Astrocyte of the cerebellum (primary cell): ENCODE measurements at regions of chr5 and their contacts with region 1.

Region 1: GRCh38 chr5:69374911-69375446 is 5.4 kb downstream of the RAD17 start:
- DNase-seq: no peak
- H3K4me3 ChIP-seq: no peak overlapping the region
- CTCF ChIP-seq: no peak

Region 2: DNA sequence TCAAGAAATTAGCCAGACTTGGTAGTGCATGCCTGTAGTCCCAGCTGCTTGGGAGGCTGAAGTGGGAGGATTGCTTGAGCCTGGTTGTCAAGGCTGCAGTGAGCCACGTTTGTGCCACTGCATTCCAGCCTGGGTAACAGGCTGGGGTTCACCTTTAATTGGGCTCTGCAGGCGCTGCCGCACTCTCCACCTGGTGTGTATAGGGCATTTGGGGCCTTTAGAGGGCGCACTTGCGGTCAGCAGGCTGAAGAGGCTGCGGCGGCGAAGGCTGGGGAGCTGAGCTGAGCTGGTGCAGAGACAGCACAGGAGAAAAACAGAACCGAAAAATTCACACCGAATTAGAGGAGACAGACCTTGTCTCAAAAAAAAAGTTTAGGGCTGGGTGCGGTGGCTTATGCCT is 109.0 kb before region 1 on chr5:
- in situ Hi-C with region 1: loop called (anchors 25 kb)
- DNase-seq: no peak
- H3K4me3 ChIP-seq: no peak overlapping the region
- CTCF ChIP-seq: peak; percentile 31